ENCODE measurements at regions of chr1 and their contacts with region 1.

Region 1: GRCh38 chr1:173429471-173430402 is 47.4 kb upstream of the PRDX6 start:
- DNase-seq: peak; percentile 74 to 94 (median 91)
- H3K4me3 ChIP-seq: peak overlapping the region in 1 of 4 donors; percentile 29
- H3K27ac ChIP-seq: peak overlapping the region in 4 of 5 donors; percentile 65 to 93 (median 76)
- H3K4me1 ChIP-seq: peaks cover 9 to 20% of the 10 kb centered on the region in 2 donors
- H3K27me3 ChIP-seq: no peaks in the 10 kb centered on the region
- CTCF ChIP-seq: peak; percentile 22 to 68 (median 49)
- POLR2A ChIP-seq: peak; percentile 22 to 64

Region 2: DNA sequence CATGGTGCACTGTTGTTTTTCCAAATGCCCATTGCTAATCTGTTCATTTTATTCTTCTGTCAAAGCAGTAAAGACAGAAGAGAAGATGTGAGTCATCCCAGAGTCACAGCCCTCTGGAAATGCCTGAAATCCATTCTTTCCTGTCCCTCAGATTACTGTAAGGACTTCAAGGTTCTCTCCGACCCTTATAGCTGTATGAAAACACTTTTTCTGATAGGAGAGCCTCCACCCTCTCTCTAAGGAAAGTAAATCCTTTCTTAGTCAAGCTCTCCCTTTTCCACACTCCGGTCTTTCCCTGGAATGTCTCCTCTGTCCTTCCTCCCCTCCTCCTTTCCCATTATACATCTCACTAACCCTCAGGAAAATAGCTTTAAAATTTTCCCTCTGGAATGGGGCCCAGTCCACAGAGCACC is 43.9 kb after region 1 on chr1:
- intact Hi-C with region 1: loop called in 1 of 2 experiments (anchors 5 kb)
- DNase-seq: peak in 3 of 7 donors; percentile 26 to 54 (median 30)
- H3K4me3 ChIP-seq: peak overlapping the region in 1 of 4 donors; percentile 24
- H3K27ac ChIP-seq: peak overlapping the region; percentile 61 to 98 (median 81)
- H3K4me1 ChIP-seq: peaks cover 27 to 41% of the 10 kb centered on the region in 2 donors
- H3K27me3 ChIP-seq: no peaks in the 10 kb centered on the region
- CTCF ChIP-seq: no peak
- POLR2A ChIP-seq: no peak

Region 3: GRCh38 chr1:173489149-173489934 is 59.6 kb after region 1 on chr1:
- intact Hi-C with region 1: no loop called
- DNase-seq: no peak
- H3K4me3 ChIP-seq: no peak overlapping the region
- H3K27ac ChIP-seq: no peak overlapping the region
- H3K4me1 ChIP-seq: no peaks in the 10 kb centered on the region
- H3K27me3 ChIP-seq: no peaks in the 10 kb centered on the region
- CTCF ChIP-seq: no peak
- POLR2A ChIP-seq: no peak

Region 4: DNA sequence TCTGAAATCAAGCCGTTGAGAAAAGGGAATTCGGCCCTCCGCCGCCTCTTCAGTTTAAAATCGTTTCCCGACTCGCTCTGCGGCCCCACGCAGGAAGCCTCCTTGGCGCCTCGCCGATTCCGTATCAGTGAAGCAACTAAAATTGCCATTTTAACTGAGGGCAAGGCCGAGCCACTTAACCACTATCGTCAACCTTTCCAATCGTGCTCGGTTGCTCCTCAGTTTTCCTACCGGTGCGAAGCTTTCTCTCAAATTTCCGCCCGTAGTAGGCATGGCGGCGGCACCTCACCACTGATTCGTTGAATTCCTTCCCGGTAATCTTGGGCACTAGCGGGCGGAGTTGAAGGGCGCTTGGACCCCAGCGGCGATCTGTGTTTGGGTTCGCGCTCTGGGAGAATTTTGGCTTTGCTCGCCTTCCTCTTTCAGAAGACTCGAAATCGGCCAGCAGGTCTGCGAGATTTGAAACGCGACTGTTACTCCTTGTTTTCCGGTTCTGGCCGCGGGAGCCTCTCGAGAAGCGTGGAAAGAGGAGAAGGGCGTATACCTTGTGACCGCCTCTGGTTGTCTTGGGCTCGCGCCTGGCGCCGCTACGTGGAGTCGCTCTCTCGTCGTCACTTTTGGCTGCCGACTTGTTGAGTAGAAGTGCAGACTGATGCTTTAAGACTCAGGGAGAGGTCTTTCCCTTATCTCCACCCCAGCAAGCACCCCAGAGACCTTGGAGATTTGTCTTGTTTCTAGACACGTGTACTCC is 394.8 kb after region 1 on chr1 and contains the starts of genes CENPL and DARS2:
- intact Hi-C with region 1: loop called (anchors 5 to 10 kb)
- DNase-seq: peak; percentile 96 to 99 (median 98)
- H3K4me3 ChIP-seq: peak within 1 kb of the TSS; percentile 24 to 70 (median 54)
- H3K27ac ChIP-seq: peak within 1 kb of the TSS; percentile 71 to 96 (median 92)
- H3K4me1 ChIP-seq: peaks cover 4 to 7% of the 10 kb centered on the region in 2 donors
- H3K27me3 ChIP-seq: no peaks in the 10 kb centered on the region
- CTCF ChIP-seq: no peak
- POLR2A ChIP-seq: peak; percentile 21 to 81
- total RNA-seq, gene CENPL: 1.3 to 63.3 (median 5.5) TPM
- total RNA-seq, gene DARS2: 20.4 to 33.5 (median 25.4) TPM

Region 5: DNA sequence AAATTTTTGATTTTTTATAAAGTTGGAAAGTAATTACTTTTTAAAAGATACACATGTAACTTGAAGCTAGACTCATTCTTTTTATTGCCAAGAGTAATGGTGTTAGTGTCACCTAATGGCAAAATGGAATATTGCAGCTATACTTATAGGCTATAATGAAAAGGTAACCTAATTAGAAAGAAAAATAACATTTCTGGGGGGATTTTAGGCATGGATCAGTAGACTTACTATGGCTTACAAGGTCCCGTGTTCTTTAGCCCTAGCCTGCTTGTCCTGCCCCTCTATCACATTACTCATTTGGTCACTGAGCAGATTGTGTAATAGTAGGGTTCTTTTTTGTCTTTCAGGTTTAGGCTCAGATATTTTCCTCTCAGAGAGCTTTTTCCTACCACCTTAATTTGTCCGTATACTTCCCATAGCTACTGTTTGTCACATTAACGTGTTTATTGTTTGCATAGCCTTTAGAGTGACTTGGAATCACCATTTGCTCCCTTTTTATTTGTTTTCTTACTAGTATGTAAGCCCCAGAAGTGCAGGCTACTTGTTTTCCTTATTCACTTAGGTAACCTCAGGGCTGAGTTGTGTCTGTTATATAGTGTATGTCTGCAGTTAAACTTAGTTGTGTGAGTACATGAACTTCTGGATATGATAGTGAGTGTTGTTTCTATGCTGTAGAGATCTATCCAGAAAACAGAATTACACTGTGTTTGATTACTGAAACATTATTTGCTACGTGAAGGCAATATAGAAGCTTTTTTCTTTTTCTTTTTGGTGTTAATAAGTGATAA is 788.2 kb after region 1 on chr1:
- intact Hi-C with region 1: loop called in 1 of 2 experiments (anchors 10 kb)
- DNase-seq: no peak
- H3K4me3 ChIP-seq: no peak overlapping the region
- H3K27ac ChIP-seq: no peak overlapping the region
- H3K4me1 ChIP-seq: no peaks in the 10 kb centered on the region
- H3K27me3 ChIP-seq: no peaks in the 10 kb centered on the region
- CTCF ChIP-seq: peak; percentile 55 to 75 (median 65)
- POLR2A ChIP-seq: no peak